Heart left ventricle (tissue), 16 donors: ENCODE measurements at regions of chr1 and their contacts with region 1.

Region 1: GRCh38 chr1:184483101-184483683 is 96.4 kb downstream of the C1orf21 start:
- DNase-seq: peak in 2 of 5 donors; percentile 57
- ATAC-seq: peak in 3 of 4 donors; percentile 33 to 60 (median 33)
- H3K4me3 ChIP-seq: no peak overlapping the region
- H3K27ac ChIP-seq: peak overlapping the region; percentile 17 to 79 (median 70)
- H3K4me1 ChIP-seq: peaks cover 11 to 86% (median 71%) of the 10 kb centered on the region in 12 donors
- H3K27me3 ChIP-seq: no peaks in the 10 kb centered on the region
- CTCF ChIP-seq: peak in 7 of 12 donors; percentile 8 to 40 (median 21)
- POLR2A ChIP-seq: no peak

Region 2: GRCh38 chr1:184393962-184394361 is 89.2 kb before region 1 on chr1:
- intact Hi-C with region 1: loop called in 2 of 10 experiments (anchors 5 kb)
- DNase-seq: no peak
- ATAC-seq: no peak
- H3K4me3 ChIP-seq: no peak overlapping the region
- H3K27ac ChIP-seq: peak overlapping the region in 2 of 12 donors; percentile 10 to 27
- H3K4me1 ChIP-seq: peaks cover 0 to 83% (median 54%) of the 10 kb centered on the region in 12 donors
- H3K27me3 ChIP-seq: no peaks in the 10 kb centered on the region
- CTCF ChIP-seq: no peak
- POLR2A ChIP-seq: no peak

Region 3: GRCh38 chr1:184555665-184556641 is 72.8 kb after region 1 on chr1:
- intact Hi-C with region 1: loop called in 5 of 10 experiments (anchors 5 to 10 kb)
- DNase-seq: peak in 2 of 5 donors; percentile 20 to 38
- ATAC-seq: peak; percentile 52 to 82 (median 65)
- H3K4me3 ChIP-seq: no peak overlapping the region
- H3K27ac ChIP-seq: peak overlapping the region; percentile 26 to 82 (median 64)
- H3K4me1 ChIP-seq: peaks cover 0 to 38% (median 27%) of the 10 kb centered on the region in 12 donors
- H3K27me3 ChIP-seq: no peaks in the 10 kb centered on the region
- CTCF ChIP-seq: no peak
- POLR2A ChIP-seq: no peak

Region 4: GRCh38 chr1:184622136-184622823 is 139.1 kb after region 1 on chr1:
- intact Hi-C with region 1: loop called in 1 of 10 experiments (anchors 10 kb)
- DNase-seq: peak; percentile 59 to 87 (median 73)
- ATAC-seq: peak; percentile 84 to 87 (median 86)
- H3K4me3 ChIP-seq: no peak overlapping the region
- H3K27ac ChIP-seq: peak overlapping the region; percentile 51 to 94 (median 81)
- H3K4me1 ChIP-seq: peaks cover 3 to 72% (median 57%) of the 10 kb centered on the region in 12 donors
- H3K27me3 ChIP-seq: no peaks in the 10 kb centered on the region
- CTCF ChIP-seq: peak in 4 of 12 donors; percentile 4 to 30 (median 10)
- POLR2A ChIP-seq: no peak